ENCODE measurements at regions of chr2 and their contacts with region 1.

Region 1: DNA sequence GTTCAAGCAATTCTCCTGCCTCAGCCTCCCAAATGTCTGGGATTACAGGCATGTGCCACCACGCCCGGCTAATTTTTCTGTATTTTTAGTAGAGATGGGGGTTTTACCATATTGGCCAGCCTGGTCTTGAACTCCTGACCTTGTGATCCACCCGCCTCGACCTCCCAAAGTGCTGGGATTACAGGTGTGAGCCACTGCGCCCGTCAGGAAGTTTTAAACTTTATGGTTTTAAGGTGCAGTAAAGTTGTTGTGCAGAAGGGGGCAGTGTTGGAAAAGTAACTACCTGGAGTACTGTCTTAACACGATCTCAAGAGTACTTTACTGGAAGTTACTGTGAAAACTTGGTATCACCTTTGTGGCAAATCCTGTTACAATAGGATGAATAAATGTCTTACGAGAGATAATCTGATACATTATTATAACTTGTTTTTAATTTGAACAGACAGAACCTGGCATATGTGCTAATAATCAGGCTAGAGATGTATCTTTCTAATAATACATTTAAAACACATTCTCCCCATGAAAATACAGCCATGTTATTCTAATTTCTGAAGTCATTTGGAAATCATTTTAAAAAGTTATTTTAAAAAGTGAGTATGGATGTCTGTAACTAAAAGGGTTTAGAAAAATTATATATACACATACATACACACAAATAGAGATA is 10.8 kb downstream of the SPDYA start:
- DNase-seq: peak; percentile 79
- ATAC-seq: peak; percentile 89
- H3K4me3 ChIP-seq: no peak overlapping the region
- H3K4me3 Mint-ChIP-seq: no peak overlapping the region
- H3K27ac ChIP-seq: no peak overlapping the region
- H3K27ac Mint-ChIP-seq: no peak overlapping the region
- H3K4me1 ChIP-seq: no peaks in the 10 kb centered on the region
- H3K4me1 Mint-ChIP-seq: peaks cover 3% of the 10 kb centered on the region
- H3K27me3 ChIP-seq: no peaks in the 10 kb centered on the region
- H3K27me3 Mint-ChIP-seq: no peaks in the 10 kb centered on the region
- CTCF ChIP-seq: peak; percentile 90

Region 2: DNA sequence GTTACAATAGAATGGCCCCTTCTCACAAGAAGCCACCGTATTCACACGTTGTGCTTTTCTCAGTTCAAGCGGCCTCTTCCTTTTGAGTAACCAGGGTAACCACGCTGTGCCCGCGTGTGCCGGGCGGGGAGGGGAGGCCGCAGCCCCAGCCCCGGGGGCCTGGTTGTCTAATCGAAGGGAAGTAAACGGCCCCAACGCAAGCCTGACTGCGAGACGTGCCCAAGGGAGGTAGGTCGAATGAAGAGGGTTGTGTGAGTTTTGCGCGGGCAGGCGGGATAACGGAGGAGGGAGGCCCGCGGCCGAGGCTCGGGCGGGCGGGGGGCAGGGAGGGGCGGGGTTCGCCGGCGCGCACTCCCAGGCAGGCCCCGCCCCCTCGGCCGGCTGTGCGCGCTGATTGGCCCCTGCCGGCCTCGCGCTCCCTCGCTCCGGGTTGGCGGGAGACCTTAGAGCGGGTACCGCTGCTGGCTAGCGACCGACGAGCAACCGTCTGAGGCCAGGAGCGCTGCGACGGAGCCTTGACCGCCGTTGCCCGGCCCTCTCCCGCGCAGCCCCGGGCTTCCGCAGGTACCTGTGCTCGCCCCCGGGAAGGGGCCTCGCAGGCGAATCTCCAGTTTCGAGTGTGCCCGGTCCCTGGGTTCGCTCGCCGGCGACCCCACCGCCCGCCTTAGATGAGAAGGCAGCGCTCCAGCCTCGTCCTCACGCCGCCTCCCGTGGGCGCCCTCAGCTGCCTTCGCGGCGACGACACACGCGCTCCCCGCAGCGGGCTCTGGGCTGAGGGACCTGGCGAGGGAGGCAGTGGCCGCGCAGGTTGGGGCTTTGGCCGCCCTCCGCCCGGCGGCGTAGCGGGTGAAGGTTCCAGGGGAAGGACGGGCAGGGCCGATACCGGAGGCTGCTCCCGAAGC is 10.8 kb before region 1 on chr2 and contains the start of gene SPDYA:
- CTCF ChIA-PET with region 1: interaction called, 10 read pairs
- POLR2A ChIA-PET with region 1: no interaction called
- intact Hi-C with region 1: no loop called
- DNase-seq: peak; percentile 81
- ATAC-seq: peak; percentile 95
- H3K4me3 ChIP-seq: peak within 1 kb of the TSS in 4 of 5 experiments; percentile 43 to 75 (median 56)
- H3K4me3 Mint-ChIP-seq: peak within 1 kb of the TSS; percentile 86
- H3K27ac ChIP-seq: no peak within 1 kb of the TSS
- H3K27ac Mint-ChIP-seq: peak within 1 kb of the TSS; percentile 65
- H3K4me1 ChIP-seq: peaks cover 12 to 16% of the 10 kb centered on the region in 2 donors
- H3K4me1 Mint-ChIP-seq: peaks cover 14% of the 10 kb centered on the region
- H3K27me3 ChIP-seq: peaks cover 0 to 7% (median 0%) of the 10 kb centered on the region in 4 experiments
- H3K27me3 Mint-ChIP-seq: no peaks in the 10 kb centered on the region
- CTCF ChIP-seq: no peak
- total RNA-seq, gene SPDYA: 2.8 and 3.5 TPM in 2 replicates

Region 3: DNA sequence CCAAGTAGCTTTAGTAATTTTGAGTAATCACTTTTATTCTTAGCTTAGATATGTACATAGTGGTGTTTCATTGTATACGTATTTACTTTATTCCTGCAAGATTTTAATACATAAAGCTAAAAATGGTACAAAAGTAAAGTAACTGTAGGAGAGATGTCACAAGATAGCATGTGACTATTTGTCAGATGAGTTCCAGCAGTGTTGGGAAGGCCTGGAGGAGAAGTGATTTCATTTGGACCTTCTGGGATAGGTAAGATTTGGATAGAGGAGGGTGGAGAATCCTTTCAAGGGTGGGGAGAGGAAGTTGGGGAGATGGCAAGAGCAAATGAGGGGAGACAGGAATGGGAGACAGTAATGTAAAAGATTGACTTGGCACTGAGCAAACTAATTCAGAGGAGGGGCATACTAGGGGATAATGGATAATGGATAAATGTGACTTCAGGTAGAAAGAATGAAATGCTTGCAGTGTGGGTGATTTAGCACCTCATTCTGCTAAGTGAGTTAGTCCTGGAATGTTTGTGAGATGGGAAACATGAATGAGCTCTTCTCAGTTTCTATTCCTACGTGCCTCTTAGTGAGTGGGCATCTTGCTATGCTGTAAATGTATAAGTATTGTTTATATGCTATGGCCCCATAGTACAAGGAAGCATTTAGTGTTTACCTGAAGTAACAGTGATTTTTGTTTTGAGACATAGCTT is 83.5 kb after region 1 on chr2:
- CTCF ChIA-PET with region 1: interaction called, 3 read pairs
- POLR2A ChIA-PET with region 1: no interaction called
- intact Hi-C with region 1: loop called (anchors 5 kb)
- DNase-seq: no peak
- ATAC-seq: no peak
- H3K4me3 ChIP-seq: no peak overlapping the region
- H3K4me3 Mint-ChIP-seq: no peak overlapping the region
- H3K27ac ChIP-seq: no peak overlapping the region
- H3K27ac Mint-ChIP-seq: peak overlapping the region; percentile 3
- H3K4me1 ChIP-seq: no peaks in the 10 kb centered on the region
- H3K4me1 Mint-ChIP-seq: peaks cover 17% of the 10 kb centered on the region
- H3K27me3 ChIP-seq: no peaks in the 10 kb centered on the region
- H3K27me3 Mint-ChIP-seq: no peaks in the 10 kb centered on the region
- CTCF ChIP-seq: no peak

Region 4: DNA sequence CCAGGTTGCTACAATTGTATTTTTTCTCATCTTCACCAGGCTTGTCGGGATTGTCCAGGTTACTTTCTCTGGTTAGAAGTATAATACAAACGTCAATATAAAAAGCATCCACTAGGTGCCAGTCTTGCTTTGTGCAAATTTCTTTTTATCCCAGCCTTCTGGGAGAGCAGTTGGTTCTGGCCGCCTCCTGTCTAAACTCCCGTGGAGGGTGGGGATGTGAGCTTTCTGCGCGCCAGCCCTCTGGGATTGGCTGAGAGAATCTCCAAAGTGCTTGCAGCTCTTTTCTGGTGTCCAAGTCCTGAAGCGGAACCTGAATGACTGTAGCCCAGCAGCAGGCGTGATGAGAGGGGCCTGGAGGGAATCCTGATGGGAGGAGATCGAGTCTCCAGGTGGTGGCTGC is 137.3 kb after region 1 on chr2:
- CTCF ChIA-PET with region 1: interaction called, 4 read pairs
- POLR2A ChIA-PET with region 1: no interaction called
- intact Hi-C with region 1: loop called (anchors 5 kb)
- DNase-seq: peak; percentile 63
- ATAC-seq: peak; percentile 54
- H3K4me3 ChIP-seq: no peak overlapping the region
- H3K4me3 Mint-ChIP-seq: no peak overlapping the region
- H3K27ac ChIP-seq: no peak overlapping the region
- H3K27ac Mint-ChIP-seq: no peak overlapping the region
- H3K4me1 ChIP-seq: no peaks in the 10 kb centered on the region
- H3K4me1 Mint-ChIP-seq: peaks cover 2% of the 10 kb centered on the region
- H3K27me3 ChIP-seq: peaks cover 0 to 4% (median 0%) of the 10 kb centered on the region in 4 experiments
- H3K27me3 Mint-ChIP-seq: peaks cover 4% of the 10 kb centered on the region
- CTCF ChIP-seq: peak; percentile 70

Region 5: DNA sequence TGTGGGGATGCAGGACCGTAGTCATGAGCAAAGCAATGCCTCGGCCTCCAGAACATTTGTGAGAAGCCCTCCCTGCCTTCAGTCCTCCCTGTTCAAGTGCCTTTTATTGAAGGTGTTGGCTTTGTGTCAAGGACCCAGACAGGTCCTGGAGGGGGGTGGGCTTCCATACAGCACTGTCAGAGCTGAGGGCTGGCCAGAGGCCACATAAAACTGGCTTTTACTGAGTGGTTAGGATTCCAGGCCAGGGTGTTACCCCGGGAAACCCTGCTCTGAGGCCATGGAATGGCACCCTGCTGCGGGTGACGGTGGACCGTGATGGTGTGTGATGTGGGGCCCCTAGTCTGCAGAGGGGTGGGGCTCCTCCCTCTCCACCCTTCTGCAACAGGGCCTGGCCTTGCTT is 201.3 kb after region 1 on chr2:
- CTCF ChIA-PET with region 1: no interaction called
- POLR2A ChIA-PET with region 1: no interaction called
- intact Hi-C with region 1: no loop called
- DNase-seq: no peak
- ATAC-seq: no peak
- H3K4me3 ChIP-seq: no peak overlapping the region
- H3K4me3 Mint-ChIP-seq: no peak overlapping the region
- H3K27ac ChIP-seq: no peak overlapping the region
- H3K27ac Mint-ChIP-seq: no peak overlapping the region
- H3K4me1 ChIP-seq: no peaks in the 10 kb centered on the region
- H3K4me1 Mint-ChIP-seq: no peaks in the 10 kb centered on the region
- H3K27me3 ChIP-seq: peaks cover 0 to 3% (median 0%) of the 10 kb centered on the region in 4 experiments
- H3K27me3 Mint-ChIP-seq: no peaks in the 10 kb centered on the region
- CTCF ChIP-seq: no peak

Region 6: DNA sequence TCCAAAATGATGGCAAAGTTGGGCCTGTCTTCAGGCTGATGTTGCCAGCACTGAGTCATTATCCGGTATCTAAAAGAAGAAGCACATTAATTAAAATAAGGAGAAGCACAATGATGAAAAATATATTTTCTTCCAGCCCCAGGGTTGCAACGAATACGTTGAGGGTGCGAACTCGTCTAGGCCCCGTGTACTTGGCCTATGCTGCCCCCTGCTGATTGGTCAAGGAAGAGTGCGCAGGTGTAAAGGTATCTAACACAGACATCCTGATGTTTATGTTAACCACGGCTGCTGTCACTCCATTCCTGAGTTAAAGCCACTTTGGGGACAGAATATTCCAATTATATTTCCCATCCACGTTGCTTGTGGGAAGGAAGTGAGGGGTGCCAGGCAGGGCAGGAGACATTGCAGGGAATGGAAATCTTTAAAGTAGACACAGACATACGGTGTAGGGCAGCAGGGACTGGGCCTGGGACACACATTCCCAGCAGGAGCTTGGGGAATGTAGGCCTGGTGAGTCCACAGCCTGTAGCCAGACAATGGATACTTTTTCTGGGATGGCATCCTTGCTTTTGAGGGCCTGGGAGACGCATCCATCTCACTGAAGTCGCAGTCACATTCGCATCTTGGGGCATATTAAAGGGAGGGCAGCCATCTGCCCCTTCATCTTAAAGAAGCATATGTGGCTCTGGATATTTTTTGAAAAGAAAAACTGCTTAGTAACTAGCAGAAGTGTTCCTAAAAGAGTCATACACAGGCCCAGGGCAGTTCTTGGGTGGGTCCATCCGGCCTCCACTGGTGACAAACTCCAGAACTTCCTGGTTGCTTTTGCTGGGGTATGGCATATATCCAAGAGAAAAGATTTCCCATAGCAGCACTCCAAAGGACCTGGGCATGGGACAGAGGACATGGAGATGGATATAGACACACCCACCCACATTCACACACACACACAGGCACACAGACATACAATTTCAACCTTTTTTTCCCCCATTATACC is 375.7 kb after region 1 on chr2:
- CTCF ChIA-PET with region 1: interaction called, 9 read pairs
- POLR2A ChIA-PET with region 1: no interaction called
- intact Hi-C with region 1: loop called (anchors 1 kb)
- DNase-seq: peak; percentile 71
- ATAC-seq: peak; percentile 74
- H3K4me3 ChIP-seq: no peak overlapping the region
- H3K4me3 Mint-ChIP-seq: no peak overlapping the region
- H3K27ac ChIP-seq: no peak overlapping the region
- H3K27ac Mint-ChIP-seq: no peak overlapping the region
- H3K4me1 ChIP-seq: no peaks in the 10 kb centered on the region
- H3K4me1 Mint-ChIP-seq: no peaks in the 10 kb centered on the region
- H3K27me3 ChIP-seq: no peaks in the 10 kb centered on the region
- H3K27me3 Mint-ChIP-seq: peaks cover 3% of the 10 kb centered on the region
- CTCF ChIP-seq: peak; percentile 83

Region 7: GRCh38 chr2:29309090-29310029 is 487.9 kb after region 1 on chr2:
- CTCF ChIA-PET with region 1: no interaction called
- POLR2A ChIA-PET with region 1: no interaction called
- intact Hi-C with region 1: loop called (anchors 5 kb)
- DNase-seq: peak; percentile 43
- ATAC-seq: no peak
- H3K4me3 ChIP-seq: no peak overlapping the region
- H3K4me3 Mint-ChIP-seq: no peak overlapping the region
- H3K27ac ChIP-seq: no peak overlapping the region
- H3K27ac Mint-ChIP-seq: no peak overlapping the region
- H3K4me1 ChIP-seq: peaks cover 0 to 4% of the 10 kb centered on the region in 2 donors
- H3K4me1 Mint-ChIP-seq: peaks cover 2% of the 10 kb centered on the region
- H3K27me3 ChIP-seq: peaks cover 0 to 7% (median 3%) of the 10 kb centered on the region in 4 experiments
- H3K27me3 Mint-ChIP-seq: peaks cover 24% of the 10 kb centered on the region
- CTCF ChIP-seq: peak; percentile 76